ENCODE measurements at regions of chr17 and their contacts with region 1.

Region 1: DNA sequence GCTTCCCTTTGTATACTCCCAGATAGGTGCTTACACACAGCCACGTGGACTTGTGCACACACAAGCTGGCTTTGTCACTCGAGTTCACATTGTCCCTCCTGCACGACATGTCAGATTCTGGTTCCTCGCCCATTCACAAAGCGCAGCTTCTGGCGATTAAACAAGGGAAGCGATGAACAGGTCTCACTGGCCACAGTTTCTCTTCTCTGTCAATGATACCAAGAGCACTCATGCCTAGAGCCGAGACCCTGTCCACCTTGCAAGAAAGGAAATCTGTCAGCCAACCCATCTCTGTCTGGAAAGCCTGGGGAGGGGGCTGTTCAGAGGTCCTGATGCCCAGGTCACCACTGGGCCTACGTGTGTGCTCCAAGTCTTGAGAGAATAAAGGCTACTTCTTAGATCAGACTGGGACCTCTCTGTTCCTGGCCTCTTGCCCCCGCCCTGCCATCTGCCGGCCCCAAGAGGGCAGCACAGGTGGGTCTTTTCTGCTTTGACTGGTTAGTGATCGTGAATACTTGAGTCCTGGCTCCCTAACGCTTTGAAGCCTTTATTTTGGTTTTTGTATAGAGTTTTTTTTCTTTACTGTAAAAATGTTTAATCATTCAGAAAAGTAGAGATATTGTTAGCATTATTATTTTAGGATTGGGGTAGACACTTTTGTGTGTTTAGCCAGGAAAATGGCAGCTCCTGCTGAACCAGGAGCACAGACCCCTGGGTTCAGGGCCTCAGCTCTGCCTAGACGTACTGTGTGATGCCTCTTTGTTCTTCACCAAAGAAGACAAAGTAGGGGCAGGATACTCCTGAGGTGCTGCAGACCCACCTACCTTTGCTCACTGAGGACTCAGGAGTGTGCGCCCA is 104.7 kb downstream of the MRM1 start:
- DNase-seq: peak; percentile 86
- H3K4me3 Mint-ChIP-seq: no peak overlapping the region
- H3K27ac Mint-ChIP-seq: no peak overlapping the region
- H3K4me1 Mint-ChIP-seq: no peaks in the 10 kb centered on the region
- H3K27me3 Mint-ChIP-seq: peaks cover 34% of the 10 kb centered on the region

Region 2: GRCh38 chr17:36755586-36755985 is 49.5 kb after region 1 on chr17:
- intact Hi-C with region 1: loop called (anchors 1 kb)
- DNase-seq: peak; percentile 83
- H3K4me3 Mint-ChIP-seq: no peak overlapping the region
- H3K27ac Mint-ChIP-seq: no peak overlapping the region
- H3K4me1 Mint-ChIP-seq: no peaks in the 10 kb centered on the region
- H3K27me3 Mint-ChIP-seq: peaks cover 5% of the 10 kb centered on the region